CD4-positive, alpha-beta memory T cell (primary cell): ENCODE measurements at regions of chr1 and their contacts with region 1.

Region 1: GRCh38 chr1:44775078-44775929 is at the start of gene RPS8:
- DNase-seq: peak; percentile 89 to 92 (median 91)
- H3K4me3 ChIP-seq: peak within 1 kb of the TSS; percentile 87 to 88
- H3K4me3 Mint-ChIP-seq: peak within 1 kb of the TSS; percentile 89 to 98 (median 94)
- H3K27ac ChIP-seq: peak within 1 kb of the TSS; percentile 78
- H3K27ac Mint-ChIP-seq: peak within 1 kb of the TSS; percentile 82 to 99 (median 98)
- H3K4me1 ChIP-seq: peaks cover 25% of the 10 kb centered on the region
- H3K4me1 Mint-ChIP-seq: peaks cover 20 to 56% (median 27%) of the 10 kb centered on the region in 4 donors
- H3K27me3 ChIP-seq: no peaks in the 10 kb centered on the region
- H3K27me3 Mint-ChIP-seq: no peaks in the 10 kb centered on the region
- total RNA-seq, gene RPS8: 2,728 to 2,811 TPM

Region 2: GRCh38 chr1:44739361-44740178 is 35.7 kb before region 1 on chr1 and contains the start of gene KIF2C:
- CTCF ChIA-PET with region 1: interaction called, 3 read pairs
- POLR2A ChIA-PET with region 1: interaction called, 8 read pairs
- intact Hi-C with region 1: loop called (anchors 1 kb)
- DNase-seq: peak; percentile 93 to 96 (median 95)
- H3K4me3 ChIP-seq: peak within 1 kb of the TSS; percentile 78 to 82
- H3K4me3 Mint-ChIP-seq: peak within 1 kb of the TSS; percentile 92 to 98 (median 95)
- H3K27ac ChIP-seq: peak within 1 kb of the TSS; percentile 79
- H3K27ac Mint-ChIP-seq: peak within 1 kb of the TSS; percentile 95 to 97 (median 96)
- H3K4me1 ChIP-seq: peaks cover 15% of the 10 kb centered on the region
- H3K4me1 Mint-ChIP-seq: peaks cover 5 to 26% (median 15%) of the 10 kb centered on the region in 4 donors
- H3K27me3 ChIP-seq: no peaks in the 10 kb centered on the region
- H3K27me3 Mint-ChIP-seq: no peaks in the 10 kb centered on the region
- total RNA-seq, gene KIF2C: 1.4 to 1.5 TPM

Region 3: GRCh38 chr1:44786138-44786840 is 11.0 kb after region 1 on chr1:
- CTCF ChIA-PET with region 1: interaction called, 39 read pairs
- POLR2A ChIA-PET with region 1: interaction called, 110 read pairs
- intact Hi-C with region 1: loop called (anchors 1 kb)
- DNase-seq: peak; percentile 72 to 84 (median 80)
- H3K4me3 ChIP-seq: peak overlapping the region; percentile 52 to 68
- H3K4me3 Mint-ChIP-seq: peak overlapping the region; percentile 73 to 83 (median 80)
- H3K27ac ChIP-seq: peak overlapping the region; percentile 53
- H3K27ac Mint-ChIP-seq: peak overlapping the region; percentile 41 to 95 (median 88)
- H3K4me1 ChIP-seq: peaks cover 39% of the 10 kb centered on the region
- H3K4me1 Mint-ChIP-seq: peaks cover 22 to 37% (median 28%) of the 10 kb centered on the region in 4 donors
- H3K27me3 ChIP-seq: no peaks in the 10 kb centered on the region
- H3K27me3 Mint-ChIP-seq: no peaks in the 10 kb centered on the region

Region 4: GRCh38 chr1:44799770-44800584 is 24.7 kb after region 1 on chr1 and contains the start of gene PLK3:
- CTCF ChIA-PET with region 1: interaction called, 8 read pairs
- POLR2A ChIA-PET with region 1: interaction called, 59 read pairs
- intact Hi-C with region 1: no loop called
- DNase-seq: peak; percentile 99 to 100 (median 99)
- H3K4me3 ChIP-seq: peak within 1 kb of the TSS; percentile 77 to 83
- H3K4me3 Mint-ChIP-seq: peak within 1 kb of the TSS; percentile 89 to 99 (median 96)
- H3K27ac ChIP-seq: peak within 1 kb of the TSS; percentile 96
- H3K27ac Mint-ChIP-seq: peak within 1 kb of the TSS; percentile 82 to 100 (median 99)
- H3K4me1 ChIP-seq: peaks cover 37% of the 10 kb centered on the region
- H3K4me1 Mint-ChIP-seq: peaks cover 23 to 48% (median 31%) of the 10 kb centered on the region in 4 donors
- H3K27me3 ChIP-seq: no peaks in the 10 kb centered on the region
- H3K27me3 Mint-ChIP-seq: no peaks in the 10 kb centered on the region
- total RNA-seq, gene PLK3: 151 to 153 TPM

Region 5: DNA sequence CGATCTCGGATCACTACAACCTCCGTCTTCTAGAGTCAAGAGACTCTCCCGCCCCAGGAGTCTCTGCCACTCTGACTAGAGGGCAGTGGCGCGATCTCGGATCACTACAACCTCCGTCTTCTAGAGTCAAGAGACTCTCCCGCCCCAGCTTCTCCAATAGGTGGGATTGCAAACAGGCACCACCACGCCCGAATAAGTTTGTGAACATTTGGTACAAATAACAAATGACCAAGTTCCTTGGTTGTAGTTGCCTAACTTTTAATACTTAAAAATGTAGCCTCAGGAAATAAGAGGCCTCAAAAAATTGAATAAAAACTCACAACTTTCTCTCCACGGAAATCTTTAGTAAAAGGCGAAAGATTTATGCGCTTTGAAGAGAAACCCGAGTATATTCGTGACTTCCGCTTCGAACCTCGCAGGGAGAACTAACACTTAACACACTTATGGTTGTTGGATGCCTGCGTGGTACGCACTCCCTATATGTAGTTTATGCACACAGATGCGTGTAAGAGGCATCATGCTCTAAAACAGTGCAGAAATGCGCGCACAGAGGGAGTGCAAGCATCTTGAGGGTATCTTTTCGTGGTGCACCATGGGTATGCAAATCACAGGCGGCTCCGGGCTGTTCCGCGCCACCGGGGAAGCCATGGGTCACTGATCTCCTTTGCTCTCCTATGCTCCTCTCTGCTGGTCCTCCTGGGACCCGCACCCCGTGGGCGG is 44.5 kb after region 1 on chr1:
- CTCF ChIA-PET with region 1: no interaction called
- POLR2A ChIA-PET with region 1: interaction called, 126 read pairs
- intact Hi-C with region 1: no loop called
- DNase-seq: peak; percentile 83 to 90 (median 88)
- H3K4me3 ChIP-seq: peak overlapping the region; percentile 74 to 86
- H3K4me3 Mint-ChIP-seq: peak overlapping the region; percentile 91 to 96 (median 95)
- H3K27ac ChIP-seq: peak overlapping the region; percentile 88
- H3K27ac Mint-ChIP-seq: peak overlapping the region; percentile 100
- H3K4me1 ChIP-seq: peaks cover 33% of the 10 kb centered on the region
- H3K4me1 Mint-ChIP-seq: peaks cover 22 to 57% (median 35%) of the 10 kb centered on the region in 4 donors
- H3K27me3 ChIP-seq: no peaks in the 10 kb centered on the region
- H3K27me3 Mint-ChIP-seq: no peaks in the 10 kb centered on the region